ENCODE measurements at regions of chr1 and their contacts with region 1.

Region 1: DNA sequence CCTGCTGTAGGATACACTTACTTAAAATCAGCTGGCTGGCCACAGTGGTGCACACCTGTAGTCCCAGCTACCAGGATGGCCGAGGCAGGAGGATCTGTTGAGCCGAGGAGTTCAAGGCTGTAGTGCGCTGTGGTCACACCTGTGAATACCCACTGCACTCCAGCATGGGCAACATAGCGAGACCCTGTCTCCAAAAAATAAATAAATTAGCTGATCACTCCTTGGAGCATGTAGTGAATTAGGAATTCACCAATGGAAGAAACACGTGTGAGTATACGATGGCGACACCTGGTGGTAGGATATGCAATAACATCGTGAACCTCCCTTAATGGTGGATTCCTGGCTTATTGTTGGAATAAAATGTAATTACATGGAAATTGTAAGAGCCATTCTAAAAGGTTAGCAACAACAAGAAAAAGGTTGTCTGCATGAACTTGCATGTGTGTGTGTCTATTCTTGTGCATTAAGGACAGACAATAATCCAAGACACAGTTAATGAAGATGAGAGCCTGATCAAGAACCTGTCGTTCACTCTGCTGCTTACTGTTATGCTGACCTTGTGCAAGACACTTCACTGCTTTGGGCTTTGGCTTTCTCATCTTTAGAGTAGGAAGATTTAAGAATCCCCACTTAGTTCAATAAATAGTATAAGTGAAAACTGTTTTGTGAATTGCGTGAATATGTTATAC is 38.6 kb upstream of the COX20 start:
- DNase-seq: peak in 4 of 5 donors; percentile 35 to 60 (median 46)
- ATAC-seq: peak in 3 of 4 donors; percentile 58 to 68 (median 63)
- H3K4me3 ChIP-seq: no peak overlapping the region
- H3K27ac ChIP-seq: no peak overlapping the region
- H3K4me1 ChIP-seq: peaks cover 0 to 4% (median 0%) of the 10 kb centered on the region in 12 donors
- H3K27me3 ChIP-seq: no peaks in the 10 kb centered on the region
- CTCF ChIP-seq: peak; percentile 79 to 91 (median 88)
- POLR2A ChIP-seq: no peak

Region 2: DNA sequence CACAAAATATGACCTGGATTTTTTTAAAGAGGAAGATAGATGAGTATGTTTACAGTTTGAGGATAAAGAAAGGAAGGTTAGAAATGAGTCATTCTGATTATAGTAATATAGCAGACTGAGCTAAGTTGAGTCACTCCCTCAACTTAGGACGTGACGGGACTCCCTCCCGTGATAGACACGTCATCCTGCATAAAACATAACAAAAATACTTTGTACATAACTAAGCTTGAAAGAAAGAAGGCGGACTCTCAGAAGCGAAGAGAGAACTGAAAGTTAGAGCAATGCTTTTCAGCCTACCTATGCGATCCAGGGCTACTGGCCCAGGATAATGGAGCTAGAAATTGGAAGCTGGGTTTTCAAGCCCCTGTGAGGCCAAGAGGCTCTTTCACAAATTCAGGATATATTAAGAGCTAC is 196.9 kb before region 1 on chr1:
- intact Hi-C with region 1: loop called (anchors 1 to 2 kb)
- DNase-seq: no peak
- ATAC-seq: peak in 1 of 4 donors; percentile 53
- H3K4me3 ChIP-seq: no peak overlapping the region
- H3K27ac ChIP-seq: no peak overlapping the region
- H3K4me1 ChIP-seq: peaks cover 0 to 10% (median 0%) of the 10 kb centered on the region in 12 donors
- H3K27me3 ChIP-seq: peaks cover 0 to 5% (median 0%) of the 10 kb centered on the region in 9 donors
- CTCF ChIP-seq: no peak
- POLR2A ChIP-seq: no peak

Region 3: DNA sequence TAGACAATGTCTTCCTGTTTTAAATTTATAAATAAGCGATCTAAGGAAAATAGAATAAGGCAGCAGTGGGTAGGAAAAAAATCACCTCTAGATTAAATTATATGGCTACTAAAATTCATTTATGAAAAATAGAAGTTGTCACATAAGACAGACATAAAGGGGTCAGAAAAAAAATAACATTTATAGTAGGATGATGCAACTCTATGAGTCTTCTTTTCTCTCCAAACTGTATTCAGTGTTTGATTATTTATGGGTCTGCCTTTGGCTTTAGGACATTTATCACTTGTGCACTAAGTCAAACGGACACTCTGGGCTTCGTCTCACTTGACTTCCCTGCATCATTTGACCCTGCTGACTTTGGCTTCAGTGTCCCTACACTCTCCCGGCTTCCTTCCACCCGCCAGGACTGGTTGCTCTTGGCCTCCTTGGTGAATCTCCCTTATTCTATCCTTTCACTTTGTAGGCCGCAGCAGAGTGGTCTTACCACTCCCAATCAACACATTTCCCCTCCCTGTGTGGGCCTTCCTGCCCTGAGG is 191.0 kb before region 1 on chr1:
- intact Hi-C with region 1: loop called (anchors 1 to 2 kb)
- DNase-seq: no peak
- ATAC-seq: no peak
- H3K4me3 ChIP-seq: no peak overlapping the region
- H3K27ac ChIP-seq: no peak overlapping the region
- H3K4me1 ChIP-seq: no peaks in the 10 kb centered on the region
- H3K27me3 ChIP-seq: peaks cover 0 to 5% (median 0%) of the 10 kb centered on the region in 9 donors
- CTCF ChIP-seq: no peak
- POLR2A ChIP-seq: no peak

Region 4: DNA sequence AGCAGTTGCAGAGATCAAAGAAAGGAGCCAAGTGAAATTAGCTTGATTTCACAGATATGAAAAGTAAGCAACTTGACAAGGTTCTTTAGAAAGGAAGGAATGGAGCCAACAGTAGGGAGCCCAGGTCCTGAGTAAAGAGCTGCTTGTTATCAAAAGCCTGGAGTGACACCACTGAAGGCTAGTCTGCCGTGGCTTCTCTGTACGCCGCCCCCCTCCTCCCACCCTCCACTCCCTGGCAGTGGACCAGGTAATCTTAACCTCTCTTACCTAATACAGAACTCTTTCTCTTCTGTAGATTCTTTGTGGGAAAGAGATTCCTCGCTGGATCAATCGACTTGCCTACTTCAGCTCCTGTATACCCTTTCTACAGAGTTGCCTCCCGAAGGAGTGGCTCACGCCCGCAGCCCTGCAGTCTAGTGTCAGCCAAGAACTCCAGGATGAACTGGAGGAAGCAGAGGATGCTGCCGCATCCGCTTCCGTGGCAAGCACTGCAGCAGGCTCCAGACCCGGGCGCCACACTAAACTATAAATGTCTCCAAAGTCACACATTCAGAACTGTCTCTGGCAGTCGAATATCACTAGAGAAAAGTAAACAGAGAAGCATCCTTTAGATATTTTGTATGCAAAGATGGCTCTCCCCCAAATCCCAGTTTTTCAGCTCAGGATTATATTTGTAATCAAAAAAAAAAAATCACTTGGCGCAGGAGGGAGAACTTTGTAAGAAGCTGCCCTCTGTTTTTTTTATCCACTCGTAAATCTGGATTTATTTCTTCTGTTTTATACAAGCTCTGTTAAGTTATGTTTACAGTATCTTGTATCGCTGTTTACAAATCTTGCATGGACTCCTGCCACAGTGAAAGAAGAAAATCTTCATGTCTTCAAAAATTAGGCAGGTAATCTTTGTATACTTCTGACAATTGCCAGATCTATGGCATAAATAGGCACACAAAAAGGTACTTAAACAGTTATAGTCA is 91.3 kb before region 1 on chr1:
- intact Hi-C with region 1: no loop called
- DNase-seq: no peak
- ATAC-seq: peak; percentile 25 to 58 (median 48)
- H3K4me3 ChIP-seq: no peak overlapping the region
- H3K27ac ChIP-seq: peak overlapping the region in 1 of 12 donors; percentile 11
- H3K4me1 ChIP-seq: peaks cover 0 to 17% (median 1%) of the 10 kb centered on the region in 12 donors
- H3K27me3 ChIP-seq: no peaks in the 10 kb centered on the region
- CTCF ChIP-seq: no peak
- POLR2A ChIP-seq: no peak

Region 5: DNA sequence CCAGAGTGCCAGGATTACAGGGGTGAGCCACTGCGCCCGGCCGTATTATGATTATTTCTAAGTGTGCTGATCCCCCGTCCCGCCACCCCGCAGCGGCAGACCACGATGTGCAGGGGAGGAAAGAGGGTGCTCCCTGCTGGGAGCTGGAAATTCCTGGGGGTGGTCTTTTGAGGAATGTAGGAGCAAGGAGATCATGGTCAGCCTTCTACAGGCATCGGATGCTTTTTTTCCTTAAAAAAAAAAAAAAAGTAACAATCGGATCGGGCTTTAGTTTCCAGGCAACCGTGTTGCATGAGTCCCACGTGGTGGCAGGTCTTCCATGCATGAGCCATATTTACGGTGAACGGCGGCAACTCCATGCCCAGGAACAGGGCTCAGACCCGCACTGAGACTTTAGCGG is 35.6 kb before region 1 on chr1:
- intact Hi-C with region 1: no loop called
- DNase-seq: no peak
- ATAC-seq: no peak
- H3K4me3 ChIP-seq: no peak overlapping the region
- H3K27ac ChIP-seq: no peak overlapping the region
- H3K4me1 ChIP-seq: no peaks in the 10 kb centered on the region
- H3K27me3 ChIP-seq: no peaks in the 10 kb centered on the region
- CTCF ChIP-seq: no peak
- POLR2A ChIP-seq: no peak

Measured in heart left ventricle (tissue), 16 donors.